Psoas muscle (tissue), 8 donors: ENCODE measurements at regions of chr6 and their contacts with region 1.

Region 1: GRCh38 chr6:4775584-4776494 is at the start of gene CDYL:
- DNase-seq: peak; percentile 91 to 94
- ATAC-seq: peak; percentile 88 to 93 (median 92)
- H3K4me3 ChIP-seq: peak within 1 kb of the TSS; percentile 71
- H3K27ac ChIP-seq: peak within 1 kb of the TSS; percentile 75
- H3K4me1 ChIP-seq: peaks cover 10% of the 10 kb centered on the region
- H3K27me3 ChIP-seq: no peaks in the 10 kb centered on the region
- CTCF ChIP-seq: peak; percentile 36
- total RNA-seq, gene CDYL: 19.9 to 30.0 (median 25.1) TPM

Region 2: GRCh38 chr6:4358414-4359114 is 417.3 kb before region 1 on chr6:
- intact Hi-C with region 1: loop called in 1 of 2 experiments (anchors 10 kb)
- DNase-seq: peak; percentile 94 to 97
- ATAC-seq: peak; percentile 96 to 98 (median 96)
- H3K4me3 ChIP-seq: peak overlapping the region; percentile 53
- H3K27ac ChIP-seq: peak overlapping the region; percentile 99
- H3K4me1 ChIP-seq: peaks cover 11% of the 10 kb centered on the region
- H3K27me3 ChIP-seq: no peaks in the 10 kb centered on the region
- CTCF ChIP-seq: no peak

Region 3: DNA sequence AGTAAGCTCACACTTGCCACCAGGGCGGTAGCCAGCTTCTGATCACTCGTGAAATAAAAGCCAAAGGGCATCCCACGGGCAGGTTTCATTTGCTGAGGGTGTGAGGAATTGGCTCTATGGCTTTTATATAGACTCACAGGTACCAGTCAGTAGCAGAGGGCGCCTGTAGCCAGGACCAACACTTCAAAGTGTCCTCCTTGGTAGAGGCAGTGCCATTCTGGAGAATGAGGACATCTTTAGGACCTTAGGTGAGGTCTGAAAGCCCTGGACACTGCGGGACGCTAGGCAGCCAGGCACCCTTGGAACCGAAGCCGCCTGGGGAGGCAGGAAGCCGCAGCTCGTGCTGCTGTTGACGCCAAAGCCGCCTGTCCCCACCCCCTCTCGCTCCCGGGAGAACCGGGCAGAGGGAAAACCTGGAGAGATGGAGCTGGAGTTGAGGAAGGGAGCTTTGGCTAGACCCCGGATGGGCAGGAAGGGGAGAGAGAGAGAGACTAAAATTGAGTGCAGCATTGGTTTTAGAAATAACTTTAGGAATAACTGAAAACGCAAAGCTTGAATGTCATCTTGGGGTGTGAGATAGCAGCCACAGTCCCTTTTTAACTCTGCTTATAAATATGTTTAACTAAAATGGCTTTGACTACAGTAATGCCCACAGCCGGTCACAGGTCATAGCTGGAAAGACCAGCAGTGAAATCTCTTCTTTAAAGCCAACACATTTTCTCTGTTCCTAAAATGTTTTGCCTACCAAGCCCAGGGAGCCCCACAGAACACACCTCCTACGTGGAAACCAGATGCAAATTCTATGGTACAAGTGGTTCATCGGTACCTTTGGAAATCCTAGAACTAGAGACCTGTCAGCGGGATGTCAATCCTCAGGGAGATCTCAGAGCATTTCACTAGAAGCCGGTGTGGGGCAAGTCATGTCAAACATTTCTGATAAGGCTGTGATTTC is 128.1 kb before region 1 on chr6:
- intact Hi-C with region 1: loop called (anchors 1 to 5 kb)
- DNase-seq: peak; percentile 81 to 92
- ATAC-seq: peak; percentile 97 to 99 (median 98)
- H3K4me3 ChIP-seq: peak overlapping the region; percentile 62
- H3K27ac ChIP-seq: peak overlapping the region; percentile 85
- H3K4me1 ChIP-seq: no peaks in the 10 kb centered on the region
- H3K27me3 ChIP-seq: no peaks in the 10 kb centered on the region
- CTCF ChIP-seq: no peak

Region 4: DNA sequence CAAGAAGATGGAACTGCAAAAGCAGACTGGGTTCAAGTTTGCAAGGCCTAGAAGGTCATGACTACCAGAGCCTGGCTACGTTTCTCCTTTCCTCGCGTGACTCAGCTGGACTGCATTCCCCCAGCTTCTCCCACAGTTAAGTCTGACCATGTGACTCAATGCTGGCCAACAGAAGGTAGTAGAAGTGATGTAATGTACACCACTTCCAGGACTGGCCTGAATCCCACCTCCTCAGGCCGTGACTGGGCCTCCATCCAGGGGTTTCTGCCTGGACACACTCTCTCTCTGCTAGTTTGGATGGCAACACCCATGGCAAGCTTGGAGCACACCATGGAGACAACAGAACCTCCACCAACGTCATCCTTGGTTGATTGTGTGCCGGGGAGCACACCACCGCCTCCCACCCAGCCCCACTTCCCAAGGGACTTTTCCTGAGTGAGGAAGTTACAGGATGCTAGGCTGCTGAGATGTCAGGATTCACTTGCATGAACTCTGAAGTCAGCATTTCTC is 111.7 kb before region 1 on chr6:
- intact Hi-C with region 1: loop called in 1 of 2 experiments (anchors 5 kb)
- DNase-seq: peak; percentile 78 to 94
- ATAC-seq: peak; percentile 90 to 93 (median 91)
- H3K4me3 ChIP-seq: no peak overlapping the region
- H3K27ac ChIP-seq: peak overlapping the region; percentile 56
- H3K4me1 ChIP-seq: peaks cover 36% of the 10 kb centered on the region
- H3K27me3 ChIP-seq: no peaks in the 10 kb centered on the region
- CTCF ChIP-seq: no peak

Region 5: GRCh38 chr6:4840169-4840568 is 64.3 kb after region 1 on chr6:
- intact Hi-C with region 1: no loop called
- DNase-seq: no peak
- ATAC-seq: no peak
- H3K4me3 ChIP-seq: no peak overlapping the region
- H3K27ac ChIP-seq: no peak overlapping the region
- H3K4me1 ChIP-seq: no peaks in the 10 kb centered on the region
- H3K27me3 ChIP-seq: no peaks in the 10 kb centered on the region
- CTCF ChIP-seq: no peak

Region 6: GRCh38 chr6:4936681-4937041 is 160.8 kb after region 1 on chr6:
- intact Hi-C with region 1: loop called in 1 of 2 experiments (anchors 10 kb)
- DNase-seq: no peak
- ATAC-seq: peak in 1 of 4 donors; percentile 74
- H3K4me3 ChIP-seq: no peak overlapping the region
- H3K27ac ChIP-seq: no peak overlapping the region
- H3K4me1 ChIP-seq: peaks cover 18% of the 10 kb centered on the region
- H3K27me3 ChIP-seq: no peaks in the 10 kb centered on the region
- CTCF ChIP-seq: peak; percentile 62